PC-3 (cell line): ENCODE measurements at regions of chr6 and their contacts with region 1.

Region 1: GRCh38 chr6:74182992-74183391 is 487.0 kb downstream of the CD109 start:
- DNase-seq: no peak
- ATAC-seq: no peak
- H3K4me3 ChIP-seq: no peak overlapping the region
- H3K27ac ChIP-seq: no peak overlapping the region
- H3K4me1 ChIP-seq: no peaks in the 10 kb centered on the region
- H3K27me3 ChIP-seq: no peaks in the 10 kb centered on the region
- CTCF ChIP-seq: no peak

Region 2: DNA sequence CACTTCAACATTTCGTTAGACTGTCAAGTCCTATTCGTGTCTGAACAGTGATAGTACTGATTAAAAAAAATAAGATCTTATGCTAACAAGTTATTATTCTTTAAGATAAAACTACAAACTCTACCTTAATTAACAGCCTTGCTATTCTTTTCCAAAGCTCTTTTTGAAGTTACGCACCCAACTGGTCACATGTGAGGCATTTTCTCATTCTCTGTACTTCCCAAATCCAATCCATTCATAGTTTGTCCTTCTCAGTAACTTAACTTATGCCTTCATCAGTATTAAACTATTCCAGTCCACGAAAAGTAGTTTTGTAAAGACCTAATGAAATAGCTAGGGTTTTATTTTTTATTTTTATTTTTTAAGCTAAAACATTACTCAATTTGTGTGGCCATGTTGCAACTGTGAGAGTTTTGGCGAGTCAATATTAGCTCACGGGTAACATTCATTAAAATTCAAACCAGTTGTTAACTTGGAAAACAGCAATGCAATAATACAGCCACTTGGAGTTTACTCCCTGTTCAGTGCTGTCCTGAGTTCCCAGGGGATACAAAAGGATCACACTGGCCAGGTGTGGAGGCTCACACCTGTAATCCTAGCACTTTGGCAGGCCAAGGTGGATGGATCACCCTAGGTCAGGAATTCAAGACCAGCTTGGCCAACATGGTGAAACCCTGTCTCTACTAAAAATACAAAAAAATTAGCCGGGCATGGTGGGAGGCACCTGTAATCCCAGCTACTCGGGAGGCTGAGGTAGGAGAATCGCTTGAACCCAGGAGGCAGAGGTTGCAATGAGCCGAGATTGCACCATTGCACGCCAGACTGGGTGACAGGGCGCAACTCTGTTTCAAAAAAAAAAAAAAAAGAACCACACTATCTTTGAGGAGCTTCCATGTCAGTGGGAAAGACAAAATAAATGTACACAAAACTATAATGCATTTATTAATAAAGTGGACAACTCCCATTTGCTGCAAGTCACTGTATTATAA is 634.2 kb before region 1 on chr6:
- CTCF ChIA-PET with region 1: interaction called, 10 read pairs
- POLR2A ChIA-PET with region 1: no interaction called
- intact Hi-C with region 1: no loop called
- DNase-seq: no peak
- ATAC-seq: no peak
- H3K4me3 ChIP-seq: no peak overlapping the region
- H3K27ac ChIP-seq: no peak overlapping the region
- H3K4me1 ChIP-seq: no peaks in the 10 kb centered on the region
- H3K27me3 ChIP-seq: no peaks in the 10 kb centered on the region
- CTCF ChIP-seq: no peak